ENCODE measurements at regions of chr20 and their contacts with region 1.

Region 1: DNA sequence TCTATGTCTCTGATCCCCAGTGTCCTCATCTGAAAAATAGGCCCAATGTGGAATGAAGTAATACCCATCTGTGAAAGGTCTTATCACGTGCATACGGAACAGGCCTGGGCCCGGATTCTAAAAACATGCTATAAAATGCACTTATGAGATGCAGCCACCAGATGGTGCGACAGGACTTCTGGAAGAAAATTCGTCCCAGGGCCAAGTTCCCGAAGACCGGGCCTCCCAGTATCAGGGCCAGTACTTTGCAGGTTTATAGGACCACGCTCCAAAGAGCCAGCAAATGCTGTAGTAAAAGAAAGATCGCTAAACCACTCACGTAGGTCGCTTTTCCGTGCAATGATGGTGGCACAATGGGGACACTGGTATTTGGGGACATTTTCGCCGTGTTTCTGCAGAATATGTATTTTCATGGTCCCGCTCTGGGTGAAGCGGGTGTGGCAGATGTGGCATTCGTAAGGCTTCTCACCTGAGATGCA is 10.6 kb downstream of the CTCFL start:
- DNase-seq: peak in 2 of 5 donors; percentile 6 to 17
- H3K4me3 ChIP-seq: no peak overlapping the region
- H3K4me3 Mint-ChIP-seq: no peak overlapping the region
- H3K27ac ChIP-seq: no peak overlapping the region
- H3K27ac Mint-ChIP-seq: no peak overlapping the region
- H3K4me1 ChIP-seq: no peaks in the 10 kb centered on the region
- H3K4me1 Mint-ChIP-seq: no peaks in the 10 kb centered on the region
- H3K27me3 ChIP-seq: no peaks in the 10 kb centered on the region
- H3K27me3 Mint-ChIP-seq: peaks cover 2 to 10% of the 10 kb centered on the region in 2 donors

Region 2: DNA sequence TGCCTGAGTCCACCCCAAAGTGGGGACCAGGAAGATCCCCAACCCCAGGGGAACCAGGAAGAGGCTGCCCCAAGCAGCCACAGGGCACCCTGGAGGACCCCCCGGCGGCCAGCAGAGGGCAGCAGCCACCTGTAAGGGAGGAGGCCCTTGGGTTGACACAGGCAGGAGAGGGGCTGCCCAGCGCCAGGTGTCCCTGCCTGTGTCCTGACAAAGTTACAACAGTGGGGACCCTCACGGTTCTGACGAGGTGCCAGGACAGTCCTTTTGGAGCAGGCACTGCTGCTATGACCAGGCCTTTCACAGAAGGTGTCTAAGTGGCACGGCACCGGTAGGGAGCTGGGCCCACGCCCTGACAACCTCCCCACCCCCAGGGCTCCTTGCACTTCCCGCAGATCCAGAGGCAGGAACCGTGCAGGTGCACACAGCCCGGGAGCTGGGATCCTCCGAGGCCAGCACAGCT is 424.6 kb before region 1 on chr20:
- CTCF ChIA-PET with region 1: no interaction called
- POLR2A ChIA-PET with region 1: no interaction called
- intact Hi-C with region 1: loop called (anchors 5 kb)
- DNase-seq: peak; percentile 10 to 34 (median 19)
- H3K4me3 ChIP-seq: no peak overlapping the region
- H3K4me3 Mint-ChIP-seq: no peak overlapping the region
- H3K27ac ChIP-seq: no peak overlapping the region
- H3K27ac Mint-ChIP-seq: no peak overlapping the region
- H3K4me1 ChIP-seq: peaks cover 4% of the 10 kb centered on the region
- H3K4me1 Mint-ChIP-seq: peaks cover 6 to 19% (median 10%) of the 10 kb centered on the region in 4 donors
- H3K27me3 ChIP-seq: no peaks in the 10 kb centered on the region
- H3K27me3 Mint-ChIP-seq: peaks cover 6 to 9% of the 10 kb centered on the region in 2 donors

Measured in CD4-positive, alpha-beta memory T cell (primary cell).